Activated CD4-positive, alpha-beta memory T cell treated with anti-CD3 and anti-CD28 coated beads for 36 hours (primary cell): ENCODE measurements at regions of chr19 and their contacts with region 1.

Region 1: DNA sequence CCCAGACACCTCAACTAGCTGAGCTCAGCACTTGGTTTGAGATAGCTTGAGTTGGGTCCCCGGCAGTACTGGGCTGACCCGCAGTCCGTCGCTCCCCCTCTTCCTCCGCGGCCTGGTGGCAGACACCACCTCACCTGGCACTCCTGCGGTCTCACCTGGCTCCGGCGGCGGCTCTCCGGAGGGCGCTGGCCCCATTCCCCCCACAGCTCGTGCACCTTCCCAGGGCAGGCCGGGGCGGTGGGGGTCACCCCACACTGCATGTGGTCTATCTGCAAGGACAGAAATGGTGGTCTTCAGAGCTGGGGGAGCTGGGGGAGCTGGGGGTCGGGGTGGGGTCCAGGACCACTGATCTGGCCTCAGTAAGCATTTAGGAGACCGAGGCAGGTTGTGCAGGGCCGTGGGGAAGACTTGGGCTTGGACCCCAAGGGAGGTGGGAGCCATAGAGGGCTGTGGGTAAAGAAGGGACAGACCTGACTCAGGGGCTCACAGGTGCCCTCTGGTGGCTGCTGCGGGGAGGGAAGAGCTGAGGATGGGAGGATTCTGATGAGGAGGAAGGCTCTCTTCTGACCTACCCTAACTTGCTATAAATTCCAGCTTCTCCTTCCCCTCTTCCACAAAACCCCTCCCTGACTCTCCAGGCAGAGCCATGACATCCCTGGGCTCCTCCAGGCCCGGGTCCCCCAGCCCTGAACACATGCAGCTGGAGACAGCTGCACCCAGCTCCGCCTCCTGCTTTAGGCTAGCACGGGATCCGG is 6.7 kb upstream of the PLIN4 start:
- DNase-seq: peak; percentile 80
- H3K4me3 Mint-ChIP-seq: no peak overlapping the region
- H3K27ac Mint-ChIP-seq: no peak overlapping the region
- H3K4me1 Mint-ChIP-seq: no peaks in the 10 kb centered on the region
- H3K27me3 Mint-ChIP-seq: peaks cover 7% of the 10 kb centered on the region

Region 2: GRCh38 chr19:4510435-4511194 is 14.4 kb before region 1 on chr19:
- CTCF ChIA-PET with region 1: interaction called, 17 read pairs
- POLR2A ChIA-PET with region 1: no interaction called
- intact Hi-C with region 1: no loop called
- DNase-seq: no peak
- H3K4me3 Mint-ChIP-seq: no peak overlapping the region
- H3K27ac Mint-ChIP-seq: no peak overlapping the region
- H3K4me1 Mint-ChIP-seq: peaks cover 7% of the 10 kb centered on the region
- H3K27me3 Mint-ChIP-seq: no peaks in the 10 kb centered on the region

Region 3: GRCh38 chr19:4534836-4535658 is 10.1 kb after region 1 on chr19 and contains the start of gene PLIN5:
- CTCF ChIA-PET with region 1: interaction called, 33 read pairs
- POLR2A ChIA-PET with region 1: no interaction called
- intact Hi-C with region 1: no loop called
- DNase-seq: peak; percentile 47
- H3K4me3 Mint-ChIP-seq: no peak within 1 kb of the TSS
- H3K27ac Mint-ChIP-seq: no peak within 1 kb of the TSS
- H3K4me1 Mint-ChIP-seq: peaks cover 12% of the 10 kb centered on the region
- H3K27me3 Mint-ChIP-seq: peaks cover 14% of the 10 kb centered on the region
- total RNA-seq, gene PLIN5: 0.17 to 0.31 TPM